Tibial artery (tissue), 4 donors: ENCODE measurements at regions of chr16 and their contacts with region 1.

Region 1: DNA sequence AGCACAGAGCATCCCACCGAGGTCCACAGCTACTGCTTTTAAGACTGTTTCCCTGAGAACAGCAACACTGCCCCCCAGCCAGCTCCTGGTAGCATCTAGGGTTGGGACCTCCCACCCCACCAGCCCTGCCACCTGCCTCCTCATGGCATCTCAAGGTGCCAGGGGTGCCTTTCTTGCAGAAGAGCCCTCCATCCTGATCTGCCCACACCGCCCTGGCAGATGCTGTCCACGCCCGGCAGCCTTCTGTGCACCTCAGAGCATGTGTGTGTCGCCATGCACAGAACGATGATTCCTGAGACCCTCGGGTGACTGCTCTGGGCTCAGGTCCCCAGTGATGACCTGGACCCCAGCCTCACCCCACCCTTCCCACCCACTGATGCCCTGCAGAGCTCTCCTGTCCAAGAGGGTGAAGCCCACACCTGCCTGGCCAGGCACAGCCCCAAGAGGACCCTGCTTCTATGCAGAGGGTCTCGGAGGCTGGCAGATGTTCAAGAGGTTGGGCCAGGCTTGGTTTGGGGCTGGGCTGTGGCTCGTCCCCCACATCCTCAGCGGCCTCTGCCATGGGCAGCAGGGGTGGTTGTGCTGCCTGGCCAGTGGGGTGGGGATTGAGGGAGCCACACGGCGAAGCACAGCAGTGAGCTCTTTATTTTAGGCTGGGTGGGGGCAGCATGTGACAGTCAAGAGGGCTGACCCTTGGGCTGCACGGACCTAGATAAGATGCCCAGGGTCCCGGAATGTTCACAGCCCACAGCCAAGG is 5.2 kb upstream of the SPATA2L start:
- DNase-seq: no peak
- H3K4me3 ChIP-seq: no peak overlapping the region
- H3K27ac ChIP-seq: no peak overlapping the region
- H3K4me1 ChIP-seq: peaks cover 0 to 15% (median 11%) of the 10 kb centered on the region in 4 donors
- H3K27me3 ChIP-seq: peaks cover 0 to 26% of the 10 kb centered on the region in 2 donors
- CTCF ChIP-seq: no peak

Region 2: DNA sequence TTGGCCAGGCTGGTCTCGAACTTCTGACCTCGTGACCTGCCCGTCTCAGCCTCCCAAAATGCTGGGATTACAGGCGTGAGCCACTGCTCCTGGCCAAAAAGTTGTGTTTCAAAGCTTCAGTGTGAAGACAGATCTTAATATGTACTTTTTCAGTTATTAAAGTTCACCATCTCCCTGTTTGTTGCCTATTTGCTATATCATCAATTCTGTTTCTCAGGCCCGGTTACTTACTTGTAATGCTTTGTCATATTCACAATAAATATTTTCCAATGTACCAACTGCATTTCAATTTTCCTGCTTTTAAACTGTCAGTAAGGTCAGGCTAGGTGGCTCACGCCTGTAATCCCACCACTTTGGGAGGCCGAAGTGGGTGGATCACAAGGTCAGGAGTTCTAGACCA is 87.3 kb after region 1 on chr16:
- intact Hi-C with region 1: loop called (anchors 2 kb)
- DNase-seq: no peak
- H3K4me3 ChIP-seq: no peak overlapping the region
- H3K27ac ChIP-seq: no peak overlapping the region
- H3K4me1 ChIP-seq: no peaks in the 10 kb centered on the region
- H3K27me3 ChIP-seq: no peaks in the 10 kb centered on the region
- CTCF ChIP-seq: no peak